Activated naive CD4-positive, alpha-beta T cell treated with anti-CD3 and anti-CD28 coated beads, Interleukin-2, amount 10 ng/mL, durations not matched to agents 7 days and 5 days (primary cell): ENCODE measurements at regions of chr1 and their contacts with region 1.

Region 1: GRCh38 chr1:117534995-117535467 is 70.8 kb upstream of the TENT5C start:
- DNase-seq: peak; percentile 51
- H3K4me3 Mint-ChIP-seq: no peak overlapping the region
- H3K27ac Mint-ChIP-seq: no peak overlapping the region
- H3K4me1 Mint-ChIP-seq: peaks cover 12% of the 10 kb centered on the region
- H3K27me3 Mint-ChIP-seq: no peaks in the 10 kb centered on the region

Region 2: DNA sequence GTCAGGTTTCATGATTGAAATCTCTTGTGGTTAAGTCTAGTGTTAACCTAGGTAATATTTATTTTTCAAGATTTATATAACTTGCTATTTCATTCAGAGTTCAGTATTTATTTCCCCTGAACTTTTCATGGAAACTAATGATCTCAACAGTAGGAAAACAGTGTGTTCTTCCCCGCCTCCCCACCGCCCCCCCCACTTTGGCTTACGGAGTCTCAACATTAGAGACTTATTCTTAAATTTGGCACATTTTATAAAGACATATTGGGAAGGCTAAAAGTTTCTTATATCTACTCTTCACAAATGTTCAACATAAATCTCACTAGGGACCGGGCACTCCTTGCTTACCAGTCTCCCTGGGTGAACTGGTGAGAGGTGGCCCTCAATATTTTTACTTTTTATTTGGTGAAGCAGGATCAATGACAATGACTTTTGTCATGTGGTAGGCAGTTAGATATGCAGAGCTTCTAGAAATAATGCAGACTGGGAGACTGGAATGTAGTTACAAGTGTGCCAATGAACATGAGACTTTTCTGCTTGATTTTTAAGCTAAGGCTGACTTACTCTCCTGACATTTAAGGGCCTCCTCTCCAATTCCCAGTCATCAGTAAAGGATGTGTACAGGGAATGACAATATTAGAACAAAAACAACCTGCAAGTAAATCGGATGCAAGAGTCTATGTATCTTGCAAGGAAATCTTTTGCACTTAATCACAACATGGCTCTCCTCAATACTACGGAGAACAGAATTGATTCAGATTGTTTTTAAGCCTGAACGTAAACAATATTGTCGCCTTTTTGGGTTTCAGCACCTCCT is 169.5 kb before region 1 on chr1:
- CTCF ChIA-PET with region 1: no interaction called
- DNase-seq: no peak
- H3K4me3 Mint-ChIP-seq: peak overlapping the region; percentile 85
- H3K27ac Mint-ChIP-seq: peak overlapping the region; percentile 94
- H3K4me1 Mint-ChIP-seq: peaks cover 39% of the 10 kb centered on the region
- H3K27me3 Mint-ChIP-seq: peaks cover 3% of the 10 kb centered on the region

Region 3: DNA sequence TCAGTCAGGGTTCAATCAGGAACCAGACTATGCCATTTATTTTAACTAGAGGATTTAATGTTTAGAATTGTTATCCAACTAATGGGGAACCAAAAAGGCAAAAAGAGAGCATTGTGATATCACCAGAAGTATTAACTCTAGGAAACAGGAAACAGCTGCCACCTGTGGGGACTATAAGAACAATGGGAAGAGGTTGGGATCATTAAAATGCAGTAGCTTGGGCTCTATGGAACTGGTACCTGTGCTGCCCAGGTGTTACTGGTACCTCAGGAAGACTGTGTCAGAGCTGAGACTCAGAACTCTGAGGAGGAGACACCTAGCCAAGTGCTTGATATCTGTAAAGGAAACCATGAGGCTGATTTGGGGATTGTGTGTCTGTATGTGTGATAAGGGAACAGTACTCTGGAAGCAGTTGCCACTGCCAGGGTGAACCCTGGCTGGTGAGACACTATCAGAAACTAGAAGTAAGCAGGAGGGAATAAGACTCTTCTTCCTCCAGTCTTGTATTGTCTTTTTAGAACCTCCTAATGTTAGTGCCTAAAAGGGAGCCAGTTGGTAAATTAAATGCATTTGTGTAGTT is 118.4 kb before region 1 on chr1:
- CTCF ChIA-PET with region 1: no interaction called
- DNase-seq: no peak
- H3K4me3 Mint-ChIP-seq: no peak overlapping the region
- H3K27ac Mint-ChIP-seq: no peak overlapping the region
- H3K4me1 Mint-ChIP-seq: no peaks in the 10 kb centered on the region
- H3K27me3 Mint-ChIP-seq: no peaks in the 10 kb centered on the region

Region 4: GRCh38 chr1:117512743-117513321 is 22.2 kb before region 1 on chr1:
- CTCF ChIA-PET with region 1: interaction called, 24 read pairs
- DNase-seq: no peak
- H3K4me3 Mint-ChIP-seq: no peak overlapping the region
- H3K27ac Mint-ChIP-seq: no peak overlapping the region
- H3K4me1 Mint-ChIP-seq: no peaks in the 10 kb centered on the region
- H3K27me3 Mint-ChIP-seq: no peaks in the 10 kb centered on the region

Region 5: GRCh38 chr1:117605774-117606648 is 71.0 kb after region 1 on chr1 and contains the start of gene TENT5C:
- CTCF ChIA-PET with region 1: interaction called, 19 read pairs
- DNase-seq: peak; percentile 99
- H3K4me3 Mint-ChIP-seq: peak within 1 kb of the TSS; percentile 97
- H3K27ac Mint-ChIP-seq: peak within 1 kb of the TSS; percentile 95
- H3K4me1 Mint-ChIP-seq: peaks cover 50% of the 10 kb centered on the region
- H3K27me3 Mint-ChIP-seq: peaks cover 20% of the 10 kb centered on the region

Region 6: DNA sequence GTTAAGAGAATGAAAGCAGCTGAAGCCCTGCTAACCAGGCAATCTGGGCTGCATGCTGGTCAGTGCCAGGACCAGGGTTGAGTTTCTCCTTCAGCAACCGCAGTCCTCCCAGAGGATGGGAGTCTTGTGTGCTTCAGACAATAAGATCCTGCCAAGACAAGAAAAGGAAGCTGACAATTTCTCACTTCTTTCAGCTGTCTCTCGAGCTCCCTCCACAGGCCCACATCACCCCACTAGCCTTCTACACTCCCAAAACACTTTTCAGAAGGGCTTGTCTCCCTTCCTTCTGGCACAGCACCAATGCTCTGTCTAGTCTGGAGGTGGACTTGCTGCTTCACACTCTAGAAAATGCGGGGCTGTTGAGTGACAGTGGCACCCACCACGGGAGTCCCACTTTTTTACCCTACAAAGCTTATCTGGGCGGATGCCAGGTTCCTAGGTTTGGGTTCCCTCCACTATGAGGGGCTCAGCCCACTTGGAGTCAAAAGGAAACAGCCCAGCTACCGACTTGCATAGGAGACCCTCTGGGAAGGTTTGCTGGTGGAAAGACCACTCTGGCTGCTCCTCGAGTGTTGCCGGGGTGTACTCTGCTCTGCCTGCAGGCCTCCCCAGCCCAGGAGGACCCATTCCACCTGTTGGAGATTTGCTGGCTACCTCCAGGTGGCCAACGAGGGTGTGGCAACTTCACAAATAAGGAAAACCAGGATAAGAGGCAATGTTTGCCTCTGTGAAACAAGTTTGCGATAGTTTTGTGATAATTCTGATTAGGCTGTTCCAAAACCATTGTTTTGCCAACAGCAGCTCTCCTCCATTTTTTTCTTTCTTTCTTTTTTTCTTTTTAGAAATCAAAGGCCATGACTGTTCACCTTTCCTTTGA is 139.7 kb after region 1 on chr1:
- CTCF ChIA-PET with region 1: interaction called, 160 read pairs
- DNase-seq: peak; percentile 76
- H3K4me3 Mint-ChIP-seq: no peak overlapping the region
- H3K27ac Mint-ChIP-seq: no peak overlapping the region
- H3K4me1 Mint-ChIP-seq: peaks cover 33% of the 10 kb centered on the region
- H3K27me3 Mint-ChIP-seq: peaks cover 53% of the 10 kb centered on the region

Region 7: DNA sequence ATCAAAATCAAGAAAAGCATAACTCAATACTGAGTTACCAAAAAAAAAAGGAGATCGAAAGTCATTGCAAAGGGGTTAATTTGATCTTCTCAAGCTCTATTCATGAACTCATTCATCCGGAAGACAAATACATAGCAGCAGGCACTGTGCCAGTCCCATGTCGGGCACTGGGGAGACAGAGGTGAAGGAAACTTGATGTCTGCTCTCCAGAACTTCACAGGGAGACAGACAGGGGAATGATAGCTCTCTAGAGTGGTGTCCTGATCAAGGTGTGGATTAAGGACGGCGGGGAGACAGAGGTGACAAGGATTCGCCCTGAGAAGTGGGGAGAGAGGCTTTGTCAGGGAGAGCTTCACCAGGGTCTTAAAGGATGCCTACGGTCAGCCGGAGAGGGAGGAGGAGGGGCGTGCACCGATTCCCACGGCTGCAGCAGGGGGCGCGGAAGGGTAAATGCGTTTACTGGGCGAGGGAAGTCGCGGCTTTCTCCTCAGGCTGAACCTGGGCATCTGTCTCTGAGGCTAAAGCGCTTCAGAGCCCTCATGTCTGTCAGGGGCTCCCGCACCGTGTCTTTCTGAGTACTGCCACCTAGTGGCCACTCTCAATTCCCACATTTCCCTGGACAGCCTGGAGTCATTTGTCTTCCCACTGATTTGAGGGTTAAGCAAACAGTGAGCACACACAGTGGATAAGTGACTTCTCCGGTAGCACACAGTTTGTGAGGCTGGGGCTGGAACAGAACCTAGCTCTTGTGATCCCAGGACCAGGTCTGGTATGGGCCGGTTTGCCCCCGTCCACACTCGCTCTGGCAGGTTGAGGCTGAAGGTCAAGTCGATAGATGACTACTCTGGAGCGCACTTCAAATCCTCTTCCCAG is 223.6 kb after region 1 on chr1:
- CTCF ChIA-PET with region 1: interaction called, 260 read pairs
- DNase-seq: peak; percentile 78
- H3K4me3 Mint-ChIP-seq: peak overlapping the region; percentile 64
- H3K27ac Mint-ChIP-seq: no peak overlapping the region
- H3K4me1 Mint-ChIP-seq: peaks cover 10% of the 10 kb centered on the region
- H3K27me3 Mint-ChIP-seq: peaks cover 39% of the 10 kb centered on the region